Left cardiac atrium (tissue), 4 donors: ENCODE measurements at regions of chr2 and their contacts with region 1.

Region 1: DNA sequence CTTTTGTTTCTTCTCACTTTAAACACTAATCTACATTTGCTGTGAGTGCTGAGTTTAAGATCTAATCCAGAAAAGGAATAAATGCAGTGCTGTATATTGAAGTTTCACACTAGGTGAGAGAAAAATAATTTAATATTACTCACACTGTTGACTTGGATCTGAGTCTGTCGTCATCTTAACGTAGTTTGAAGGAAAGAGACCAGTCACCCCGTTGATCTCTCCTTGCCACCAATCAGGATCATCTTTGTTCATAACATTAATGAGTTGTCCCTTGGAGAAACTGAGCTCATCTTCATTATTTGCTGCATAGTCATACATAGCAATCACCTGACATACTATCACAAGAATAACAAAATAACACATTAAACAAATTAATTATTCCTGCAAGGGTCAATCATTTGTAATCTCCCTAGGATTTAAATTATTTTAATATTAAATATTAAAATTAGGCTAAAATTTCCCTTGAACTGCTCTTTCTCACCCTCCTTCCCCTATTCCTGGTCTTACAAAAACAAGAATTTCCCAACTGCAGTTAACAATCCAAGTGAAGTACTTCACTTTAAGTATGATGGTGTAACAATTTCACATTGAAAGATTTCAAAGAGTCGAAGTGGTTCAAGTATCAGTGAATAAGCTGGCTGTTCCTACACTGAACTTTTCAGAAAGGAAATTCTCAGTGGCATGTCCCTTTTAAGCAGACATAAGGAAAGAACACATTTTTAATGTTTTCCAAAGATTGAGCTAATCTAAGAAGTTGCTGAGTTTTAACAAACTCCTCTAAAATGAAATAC is 71.3 kb downstream of the FAM228A start:
- DNase-seq: no peak
- ATAC-seq: no peak

Region 2: GRCh38 chr2:24297663-24298062 is 51.5 kb after region 1 on chr2:
- intact Hi-C with region 1: loop called in 1 of 2 experiments (anchors 10 kb)
- DNase-seq: no peak
- ATAC-seq: no peak